ENCODE measurements at regions of chrX and their contacts with region 1.

Region 1: DNA sequence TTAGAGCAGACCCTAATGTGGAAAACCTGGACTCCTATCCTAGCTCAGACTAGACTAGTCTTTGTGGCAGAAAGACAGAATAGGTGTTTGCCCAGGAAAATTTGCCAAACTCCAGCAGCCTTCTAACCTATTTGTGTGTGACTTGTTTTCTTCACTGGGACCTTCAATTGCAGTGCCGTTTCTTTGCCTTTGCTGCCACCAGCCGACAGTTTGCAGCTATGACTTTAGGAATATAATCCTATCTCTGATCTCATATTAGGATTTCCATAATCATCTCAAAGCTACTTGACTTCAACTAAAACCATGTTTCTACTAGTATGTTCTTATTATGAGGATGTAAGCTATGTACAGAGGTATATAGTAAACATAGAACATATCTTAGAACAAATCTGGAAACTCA is 60.2 kb upstream of the PGAM4 start:
- H3K4me3 ChIP-seq: no peak overlapping the region
- H3K27ac ChIP-seq: no peak overlapping the region
- H3K4me1 ChIP-seq: no peaks in the 10 kb centered on the region
- CTCF ChIP-seq: peak; percentile 76

Region 2: DNA sequence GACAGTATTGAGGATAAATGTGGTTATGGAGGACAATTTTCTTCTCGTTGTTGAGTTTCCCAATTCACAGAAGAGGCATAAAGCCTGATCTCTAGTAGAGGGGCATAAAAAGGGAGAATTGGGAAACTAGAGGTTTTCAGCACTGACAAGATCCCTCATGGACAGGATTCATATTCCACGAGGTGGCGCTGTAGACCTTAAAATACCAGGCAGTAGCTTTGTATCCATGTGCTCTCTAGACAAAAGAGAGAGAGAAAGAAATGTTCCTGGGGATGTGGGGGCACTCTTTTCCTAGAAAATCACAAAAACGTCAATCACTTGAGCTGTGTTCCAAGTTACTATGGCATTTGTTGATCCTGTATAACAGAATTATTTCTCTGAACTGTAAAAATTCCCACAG is 1473.8 kb before region 1 on chrX:
- CTCF ChIA-PET with region 1: interaction called, 16 read pairs
- POLR2A ChIA-PET with region 1: no interaction called
- H3K4me3 ChIP-seq: no peak overlapping the region
- H3K27ac ChIP-seq: no peak overlapping the region
- H3K4me1 ChIP-seq: no peaks in the 10 kb centered on the region
- CTCF ChIP-seq: no peak

Region 3: GRCh38 chrX:78119521-78120227 is 90.0 kb after region 1 on chrX:
- CTCF ChIA-PET with region 1: no interaction called
- POLR2A ChIA-PET with region 1: no interaction called
- H3K4me3 ChIP-seq: no peak overlapping the region
- H3K27ac ChIP-seq: no peak overlapping the region
- H3K4me1 ChIP-seq: no peaks in the 10 kb centered on the region
- CTCF ChIP-seq: 0 out of 2 replicates have a peak, but pooled peaks have one; percentile 10

Measured in HEK293 (cell line).